ENCODE measurements at regions of chr12 and their contacts with region 1.

Region 1: GRCh38 chr12:122752464-122753318 is at the start of gene DENR:
- DNase-seq: peak; percentile 99
- H3K4me3 ChIP-seq: peak within 1 kb of the TSS; percentile 94
- H3K27ac ChIP-seq: peak within 1 kb of the TSS; percentile 83
- H3K4me1 ChIP-seq: peaks cover 4% of the 10 kb centered on the region
- H3K27me3 ChIP-seq: no peaks in the 10 kb centered on the region
- CTCF ChIP-seq: peak; percentile 77
- total RNA-seq, gene DENR: 35.8 to 37.8 TPM

Region 2: DNA sequence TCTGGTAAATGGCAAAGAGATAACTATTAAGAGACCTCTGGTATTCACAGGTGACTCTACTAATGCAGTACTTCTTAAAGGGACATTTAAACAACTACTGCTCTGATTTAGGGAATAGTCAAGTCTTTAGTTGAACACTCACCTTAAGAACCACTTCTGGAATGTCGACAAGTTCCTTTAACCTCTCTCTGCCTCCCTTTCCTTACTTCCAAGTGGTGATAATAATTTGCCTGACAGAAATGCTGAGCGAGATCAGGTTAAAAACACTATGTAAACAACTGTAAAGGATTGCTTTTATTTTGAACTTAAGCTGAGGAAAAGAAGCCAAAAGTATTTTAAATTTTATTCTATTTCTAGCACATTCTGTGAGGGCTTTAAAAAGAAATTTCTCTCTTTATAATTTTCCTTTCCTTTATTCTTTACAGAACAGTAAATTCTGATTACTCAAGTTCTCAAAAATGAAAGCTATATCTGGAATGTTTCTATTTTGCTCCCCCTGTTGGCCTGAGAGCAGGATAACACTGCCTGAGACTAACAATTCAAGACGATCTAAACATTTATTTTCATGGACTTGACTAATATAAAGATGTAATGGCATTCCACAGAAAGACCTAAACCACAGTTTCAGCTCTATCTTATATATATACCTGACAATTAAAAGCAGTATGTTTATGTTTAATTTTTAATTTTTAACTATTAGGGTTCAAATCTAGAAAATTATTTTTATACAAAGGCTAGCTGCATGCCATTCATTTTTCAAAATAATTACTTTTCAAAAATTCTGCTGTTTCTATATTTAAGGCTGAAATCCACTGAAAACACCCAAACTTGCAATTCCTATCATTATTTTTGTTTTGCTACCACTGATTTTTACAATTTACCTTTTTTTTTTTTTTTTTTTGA is 281.1 kb before region 1 on chr12:
- intact Hi-C with region 1: no loop called
- DNase-seq: no peak
- H3K4me3 ChIP-seq: no peak overlapping the region
- H3K27ac ChIP-seq: peak overlapping the region; percentile 11
- H3K4me1 ChIP-seq: no peaks in the 10 kb centered on the region
- H3K27me3 ChIP-seq: no peaks in the 10 kb centered on the region
- CTCF ChIP-seq: peak; percentile 80

Region 3: DNA sequence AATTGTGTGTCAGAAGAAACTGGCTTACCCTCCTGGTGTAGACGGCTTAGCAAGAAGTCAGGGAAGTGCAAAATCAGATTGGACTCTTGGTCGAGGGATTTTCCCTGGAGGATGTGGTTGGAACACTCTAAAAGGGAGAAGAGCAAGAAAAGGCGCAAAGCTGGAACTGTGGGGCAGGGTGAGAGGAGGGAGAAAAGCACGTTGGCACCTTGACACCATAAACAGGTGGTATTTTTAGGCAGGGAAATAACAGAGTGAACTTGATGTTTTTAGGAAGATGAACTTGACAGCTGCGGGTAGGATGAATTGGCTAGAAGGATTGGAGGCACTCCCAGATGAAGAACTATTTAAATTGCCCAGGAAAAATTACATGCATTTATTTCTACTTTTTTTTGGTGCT is 117.2 kb before region 1 on chr12:
- intact Hi-C with region 1: loop called (anchors 5 kb)
- DNase-seq: no peak
- H3K4me3 ChIP-seq: no peak overlapping the region
- H3K27ac ChIP-seq: no peak overlapping the region
- H3K4me1 ChIP-seq: no peaks in the 10 kb centered on the region
- H3K27me3 ChIP-seq: no peaks in the 10 kb centered on the region
- CTCF ChIP-seq: no peak

Measured in colonic mucosa (tissue), 4 donors.